Right ventricle myocardium superior (tissue), 1 donor: ENCODE measurements at regions of chr10 and their contacts with region 1.

Region 1: GRCh38 chr10:128069351-128070051 is 56.7 kb downstream of the MKI67 start:
- DNase-seq: peak; percentile 71
- ATAC-seq: peak; percentile 79

Region 2: DNA sequence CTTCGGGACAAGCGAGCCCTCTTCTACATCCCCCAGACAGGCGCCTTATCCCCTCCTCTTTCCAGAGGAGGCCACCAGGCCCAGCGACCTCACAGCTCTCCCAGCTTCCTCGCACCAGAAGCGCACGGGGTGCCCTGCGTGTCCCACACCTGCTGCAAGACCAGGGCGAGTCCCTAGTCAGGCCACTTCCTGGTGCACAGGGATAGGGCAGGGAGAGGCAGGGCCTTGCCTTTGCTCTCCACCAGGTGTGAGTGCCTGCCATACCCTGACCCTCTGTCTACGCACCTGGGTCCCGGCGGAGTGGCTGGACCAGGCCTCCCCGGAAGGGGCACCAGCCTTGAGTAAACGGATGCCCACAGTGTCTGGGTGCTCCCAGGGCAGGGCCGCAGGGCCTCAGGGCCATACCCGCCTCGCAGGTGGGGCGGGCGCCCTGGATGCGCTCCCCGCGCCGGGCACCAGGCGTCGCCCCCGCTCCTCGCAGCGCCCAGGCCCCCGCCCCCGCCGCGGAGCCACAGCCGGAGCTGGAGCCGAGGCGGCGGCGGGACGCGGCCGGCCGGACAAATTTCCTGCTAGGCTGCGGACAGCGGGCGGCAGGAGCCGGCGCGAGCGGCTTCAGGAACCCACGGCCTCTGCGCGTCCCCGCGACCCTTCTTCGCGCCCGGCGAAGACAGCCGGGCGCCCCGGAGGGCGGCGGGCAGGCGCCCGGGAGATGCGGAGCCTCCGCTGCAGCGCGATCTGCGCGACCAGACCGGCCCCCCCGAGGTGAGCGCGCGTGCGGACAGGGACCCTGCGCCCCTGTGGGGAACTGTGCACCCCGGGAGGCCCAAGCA is 162.7 kb before region 1 on chr10 and contains the start of gene PTPRE:
- intact Hi-C with region 1: loop called (anchors 2 kb)
- DNase-seq: peak; percentile 88
- ATAC-seq: peak; percentile 94
- total RNA-seq, gene PTPRE: 16.0 TPM

Region 3: GRCh38 chr10:127945335-127945734 is 124.2 kb before region 1 on chr10:
- intact Hi-C with region 1: no loop called
- DNase-seq: no peak
- ATAC-seq: peak; percentile 69

Region 4: DNA sequence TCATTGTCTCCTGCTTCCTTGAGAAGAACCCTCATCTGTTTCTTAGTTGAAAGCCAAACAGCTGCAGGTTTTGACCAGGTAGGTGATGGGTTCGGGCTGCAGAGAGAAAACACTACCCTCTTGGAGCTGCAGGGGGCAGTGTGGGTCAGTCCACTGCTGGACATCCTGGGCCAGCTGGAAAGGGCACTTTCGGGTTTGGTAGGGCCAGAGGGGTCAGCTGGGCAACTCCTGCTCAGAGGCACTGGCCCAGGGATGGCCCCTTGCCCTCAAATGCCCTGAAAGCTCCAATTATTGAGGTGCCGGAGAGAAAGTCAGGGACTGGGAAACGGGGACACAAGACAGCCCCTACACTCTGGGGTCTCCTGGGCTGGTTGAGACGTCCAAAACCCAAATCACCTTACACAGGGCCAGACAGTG is 33.9 kb before region 1 on chr10:
- intact Hi-C with region 1: loop called (anchors 5 kb)
- DNase-seq: peak; percentile 66
- ATAC-seq: peak; percentile 75